AG04450 (cell line): ENCODE measurements at regions of chr3 and their contacts with region 1.

Region 1: DNA sequence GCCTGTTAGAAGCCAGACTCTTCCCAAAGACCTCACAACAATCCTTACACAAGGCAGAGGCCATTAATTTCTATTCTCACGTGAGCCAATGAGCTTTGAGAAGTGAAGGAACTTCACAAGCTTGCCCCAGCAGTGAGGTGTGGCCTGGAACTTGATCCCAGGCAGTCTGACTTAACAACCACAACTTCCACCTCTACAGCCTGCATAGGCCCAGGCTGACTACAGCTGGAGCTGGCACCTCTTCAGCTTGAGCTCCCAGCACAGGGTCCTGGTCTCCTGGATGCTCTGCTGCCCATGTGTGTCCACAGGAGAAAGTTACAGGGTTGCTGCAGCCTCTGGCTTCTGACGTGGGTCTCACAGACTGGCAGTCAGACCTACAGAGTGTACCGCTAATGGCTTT is 111.0 kb downstream of the ERC2 start:
- DNase-seq: no peak
- H3K4me3 ChIP-seq: no peak overlapping the region
- H3K27ac ChIP-seq: no peak overlapping the region
- H3K27me3 ChIP-seq: no peaks in the 10 kb centered on the region
- CTCF ChIP-seq: no peak

Region 2: GRCh38 chr3:56339671-56340070 is 17.6 kb before region 1 on chr3:
- CTCF ChIA-PET with region 1: interaction called, 11 read pairs
- POLR2A ChIA-PET with region 1: no interaction called
- DNase-seq: no peak
- H3K4me3 ChIP-seq: no peak overlapping the region
- H3K27ac ChIP-seq: no peak overlapping the region
- H3K27me3 ChIP-seq: no peaks in the 10 kb centered on the region
- CTCF ChIP-seq: no peak